ENCODE measurements at regions of chrX and their contacts with region 1.

Region 1: DNA sequence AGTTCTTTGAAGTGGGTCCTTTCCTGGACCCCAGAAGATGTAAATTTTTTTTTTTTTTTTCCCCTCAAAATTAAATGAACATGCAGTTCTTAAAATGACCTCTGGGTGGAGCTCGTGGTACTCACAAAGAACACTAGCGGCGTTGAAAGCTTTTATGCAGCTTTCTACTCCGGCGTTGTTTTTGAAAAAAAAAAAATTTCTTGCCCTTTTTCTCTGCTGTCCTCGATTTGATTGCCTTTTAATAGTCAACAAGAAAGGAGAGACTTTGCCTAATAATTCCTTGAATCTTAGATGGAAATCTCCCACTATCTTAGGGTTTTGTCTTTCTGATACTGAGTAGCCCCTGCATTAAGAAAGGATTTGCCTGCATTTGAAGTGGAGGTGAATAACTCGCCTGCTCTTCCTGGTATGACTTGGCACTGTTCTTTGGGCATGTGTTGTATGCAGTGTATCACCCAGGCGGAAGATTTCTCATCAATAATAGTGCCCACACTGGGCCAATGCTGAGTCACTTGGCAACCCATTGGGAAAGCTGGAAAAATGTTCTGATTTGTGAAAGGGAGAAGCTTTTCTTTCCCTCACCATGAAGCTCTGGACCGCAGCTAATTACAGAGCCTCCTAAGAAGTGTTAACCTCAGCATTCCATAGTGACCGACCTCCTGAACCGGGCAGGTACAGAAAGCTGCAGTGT is 104.0 kb downstream of the PHEX start:
- DNase-seq: no peak
- ATAC-seq: peak; percentile 43
- H3K4me3 ChIP-seq: no peak overlapping the region
- H3K27ac ChIP-seq: no peak overlapping the region
- H3K4me1 ChIP-seq: no peaks in the 10 kb centered on the region
- H3K27me3 ChIP-seq: no peaks in the 10 kb centered on the region
- CTCF ChIP-seq: peak; percentile 51 to 68 (median 68)
- EP300 ChIP-seq: no peak
- POLR2A ChIP-seq: no peak
- RAD21 ChIP-seq: peak; percentile 78

Region 2: GRCh38 chrX:21993265-21993664 is 142.9 kb before region 1 on chrX:
- CTCF ChIA-PET with region 1: interaction called, 19 read pairs
- POLR2A ChIA-PET with region 1: interaction called, 7 read pairs
- RAD21 ChIA-PET with region 1: interaction called, 7 read pairs
- SMC1A ChIA-PET with region 1: interaction called, 121 read pairs
- in situ Hi-C with region 1: no loop called
- intact Hi-C with region 1: no loop called
- DNase-seq: peak; percentile 30
- ATAC-seq: peak; percentile 36
- H3K4me3 ChIP-seq: no peak overlapping the region
- H3K27ac ChIP-seq: peak overlapping the region; percentile 62
- H3K4me1 ChIP-seq: peaks cover 16% of the 10 kb centered on the region
- H3K27me3 ChIP-seq: no peaks in the 10 kb centered on the region
- CTCF ChIP-seq: no peak
- EP300 ChIP-seq: no peak; a peak in 1 of 4 replicates
- POLR2A ChIP-seq: no peak
- RAD21 ChIP-seq: no peak

Region 3: DNA sequence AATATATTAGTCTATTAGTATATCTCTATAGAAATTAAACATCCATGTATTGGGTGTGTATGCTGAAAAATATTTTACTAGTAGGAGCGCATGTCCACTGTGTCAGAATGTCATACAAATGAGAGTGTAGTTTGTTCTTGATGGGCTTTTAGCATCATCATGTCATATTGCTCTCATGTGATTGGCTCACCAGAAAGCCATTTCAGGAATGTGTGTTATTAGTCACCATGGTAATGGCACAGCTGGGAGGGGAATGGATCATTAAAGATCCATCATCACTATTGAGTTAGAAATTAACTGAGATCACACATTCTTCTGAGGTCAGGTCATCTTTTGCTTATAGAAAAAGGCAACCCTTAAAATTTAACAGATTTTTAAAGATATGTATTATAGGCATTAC is 26.7 kb before region 1 on chrX:
- CTCF ChIA-PET with region 1: interaction called, 38 read pairs
- POLR2A ChIA-PET with region 1: interaction called, 3 read pairs
- RAD21 ChIA-PET with region 1: interaction called, 7 read pairs
- SMC1A ChIA-PET with region 1: interaction called, 14 read pairs
- in situ Hi-C with region 1: no loop called
- intact Hi-C with region 1: no loop called
- DNase-seq: no peak
- ATAC-seq: peak; percentile 50
- H3K4me3 ChIP-seq: no peak overlapping the region
- H3K27ac ChIP-seq: no peak overlapping the region
- H3K4me1 ChIP-seq: no peaks in the 10 kb centered on the region
- H3K27me3 ChIP-seq: no peaks in the 10 kb centered on the region
- CTCF ChIP-seq: no peak
- EP300 ChIP-seq: no peak
- POLR2A ChIP-seq: no peak
- RAD21 ChIP-seq: no peak

Region 4: GRCh38 chrX:22159071-22159799 is 23.1 kb after region 1 on chrX:
- CTCF ChIA-PET with region 1: interaction called, 17 read pairs
- POLR2A ChIA-PET with region 1: no interaction called
- RAD21 ChIA-PET with region 1: interaction called, 7 read pairs
- SMC1A ChIA-PET with region 1: interaction called, 5 read pairs
- in situ Hi-C with region 1: no loop called
- intact Hi-C with region 1: no loop called
- DNase-seq: no peak
- ATAC-seq: no peak
- H3K4me3 ChIP-seq: no peak overlapping the region
- H3K27ac ChIP-seq: no peak overlapping the region
- H3K4me1 ChIP-seq: no peaks in the 10 kb centered on the region
- H3K27me3 ChIP-seq: no peaks in the 10 kb centered on the region
- CTCF ChIP-seq: no peak
- EP300 ChIP-seq: no peak
- POLR2A ChIP-seq: no peak
- RAD21 ChIP-seq: no peak

Region 5: DNA sequence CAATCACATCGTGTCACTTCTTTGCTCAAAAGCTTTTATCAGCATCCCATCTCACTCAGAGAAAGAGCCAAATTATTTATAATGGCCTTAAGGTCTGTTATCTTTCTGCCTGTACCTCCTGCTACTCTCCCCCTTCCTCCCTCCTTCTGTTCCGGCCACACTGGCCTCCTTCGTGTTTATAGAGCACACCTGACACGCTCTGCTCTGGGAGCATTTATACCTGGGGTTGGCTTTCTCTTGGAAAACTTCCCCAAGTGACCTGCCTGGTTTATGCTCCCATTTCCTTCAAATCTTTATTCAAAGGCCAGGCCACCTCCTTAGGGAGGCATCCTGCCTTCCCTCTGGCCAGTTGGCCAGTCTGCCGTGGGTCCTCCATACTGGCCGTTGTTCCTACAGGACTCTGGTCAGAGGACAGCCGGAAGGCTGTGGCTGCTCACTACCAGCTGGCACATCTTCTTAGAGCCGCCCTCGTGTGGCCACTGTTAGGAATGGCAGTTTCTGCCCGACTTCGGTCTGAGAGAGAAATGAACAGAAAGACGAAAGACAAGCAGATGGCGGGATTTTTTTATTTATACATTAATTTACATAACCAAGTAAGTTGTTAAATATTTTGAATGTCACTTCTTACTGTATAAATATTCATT is 56.4 kb after region 1 on chrX:
- CTCF ChIA-PET with region 1: interaction called, 22 read pairs
- POLR2A ChIA-PET with region 1: no interaction called
- RAD21 ChIA-PET with region 1: interaction called, 19 read pairs
- SMC1A ChIA-PET with region 1: interaction called, 17 read pairs
- in situ Hi-C with region 1: no loop called
- intact Hi-C with region 1: loop called (anchors 1 kb)
- DNase-seq: peak; percentile 3
- ATAC-seq: peak; percentile 96
- H3K4me3 ChIP-seq: no peak overlapping the region
- H3K27ac ChIP-seq: no peak overlapping the region
- H3K4me1 ChIP-seq: no peaks in the 10 kb centered on the region
- H3K27me3 ChIP-seq: no peaks in the 10 kb centered on the region
- CTCF ChIP-seq: peak; percentile 73 to 82 (median 76)
- EP300 ChIP-seq: no peak
- POLR2A ChIP-seq: no peak
- RAD21 ChIP-seq: peak; percentile 58

Region 6: DNA sequence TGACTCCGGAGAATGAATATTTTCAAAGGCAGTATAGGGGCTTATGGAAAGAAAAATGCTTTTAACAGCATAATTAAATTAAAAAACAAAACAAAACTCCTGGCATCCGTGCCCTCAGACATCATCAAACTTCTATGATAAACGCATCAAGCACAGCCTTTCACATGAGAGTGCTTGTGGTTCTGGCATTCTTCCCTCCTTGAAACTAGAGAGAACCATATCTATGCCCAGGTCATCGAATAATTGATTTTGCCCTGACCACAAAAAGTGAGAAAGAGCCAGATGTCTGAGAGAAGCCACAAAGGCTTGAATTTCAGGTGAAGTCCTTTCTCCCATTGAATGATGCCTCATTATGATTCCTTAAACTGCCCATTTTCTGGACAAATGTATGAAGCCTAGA is 423.4 kb after region 1 on chrX:
- CTCF ChIA-PET with region 1: no interaction called
- POLR2A ChIA-PET with region 1: no interaction called
- RAD21 ChIA-PET with region 1: no interaction called
- SMC1A ChIA-PET with region 1: no interaction called
- in situ Hi-C with region 1: no loop called
- intact Hi-C with region 1: no loop called
- DNase-seq: no peak
- ATAC-seq: no peak
- H3K4me3 ChIP-seq: no peak overlapping the region
- H3K27ac ChIP-seq: no peak overlapping the region
- H3K4me1 ChIP-seq: no peaks in the 10 kb centered on the region
- H3K27me3 ChIP-seq: no peaks in the 10 kb centered on the region
- CTCF ChIP-seq: no peak
- EP300 ChIP-seq: no peak
- POLR2A ChIP-seq: no peak
- RAD21 ChIP-seq: no peak

Region 7: DNA sequence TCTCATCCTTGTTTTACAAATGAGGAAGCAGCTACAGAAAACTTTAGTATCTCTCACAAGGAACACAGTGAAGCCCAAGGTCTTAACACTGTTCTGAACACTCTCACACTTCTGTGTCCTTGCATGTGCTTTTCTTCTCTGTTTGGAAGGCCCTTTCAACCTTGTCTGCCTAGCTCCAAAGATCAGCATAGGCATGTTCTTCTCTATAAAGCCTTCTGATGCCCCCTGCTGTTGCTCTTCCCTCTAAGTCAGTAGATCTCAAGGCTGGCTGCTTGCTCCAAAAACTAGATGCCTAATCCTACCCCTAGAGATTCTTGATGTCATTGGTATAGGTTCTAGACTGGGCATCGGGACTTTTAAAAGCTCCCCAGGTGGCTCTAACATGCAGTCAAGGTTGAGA is 1765.7 kb after region 1 on chrX:
- CTCF ChIA-PET with region 1: interaction called, 5 read pairs
- POLR2A ChIA-PET with region 1: no interaction called
- RAD21 ChIA-PET with region 1: interaction called, 11 read pairs
- SMC1A ChIA-PET with region 1: no interaction called
- in situ Hi-C with region 1: no loop called
- intact Hi-C with region 1: no loop called
- DNase-seq: peak; percentile 60
- ATAC-seq: peak; percentile 85
- H3K4me3 ChIP-seq: no peak overlapping the region
- H3K27ac ChIP-seq: peak overlapping the region; percentile 71
- H3K4me1 ChIP-seq: peaks cover 12% of the 10 kb centered on the region
- H3K27me3 ChIP-seq: no peaks in the 10 kb centered on the region
- CTCF ChIP-seq: peak; percentile 46 to 72 (median 50); a peak in 5 of 6 replicates
- EP300 ChIP-seq: no peak
- POLR2A ChIP-seq: no peak
- RAD21 ChIP-seq: peak; percentile 73

Measured in GM12878 (cell line).